Heart left ventricle (tissue), 16 donors: ENCODE measurements at regions of chr9 and their contacts with region 1.

Region 1: DNA sequence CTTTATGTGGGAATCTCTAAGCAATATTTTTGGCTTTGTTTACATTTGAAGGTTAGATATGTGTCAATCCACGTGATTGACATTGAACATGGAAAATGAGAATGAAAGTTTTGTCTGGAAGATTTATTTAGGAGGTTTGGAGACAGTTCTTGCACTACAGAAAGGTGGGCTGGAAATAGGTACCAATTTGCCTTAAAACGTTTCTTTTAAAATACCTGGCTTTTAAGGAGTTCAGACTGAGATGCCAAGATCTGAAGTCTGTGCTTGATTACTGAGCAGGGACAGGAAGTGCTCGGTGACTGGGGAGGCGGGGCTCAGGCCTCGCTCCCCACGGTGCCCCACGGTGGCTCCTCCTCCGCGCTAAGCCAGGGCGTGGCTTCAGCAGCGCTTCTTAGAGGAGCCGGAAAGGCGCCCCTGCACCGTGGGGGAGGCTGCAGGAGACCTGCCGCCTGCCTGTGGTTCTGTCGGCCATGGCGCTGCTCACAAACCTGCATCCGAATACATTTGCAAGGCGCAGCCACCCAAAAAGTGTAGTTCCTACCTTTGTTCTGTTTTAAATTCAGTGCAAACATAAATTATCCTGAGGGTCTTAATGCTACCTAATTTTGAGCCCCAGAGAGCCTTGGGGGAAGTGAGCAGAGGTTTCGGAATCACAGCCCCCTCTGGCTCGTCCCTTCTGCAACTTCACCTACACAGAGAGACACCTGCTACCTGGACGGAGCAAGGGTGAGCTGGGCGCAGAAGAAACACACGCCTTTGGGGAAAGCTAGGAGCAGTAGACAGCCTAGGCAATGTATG is 49.2 kb downstream of the USP20 start:
- DNase-seq: peak; percentile 86 to 95 (median 89)
- ATAC-seq: peak; percentile 61 to 78 (median 76)
- H3K4me3 ChIP-seq: peak overlapping the region in 11 of 12 donors; percentile 1 to 57 (median 48)
- H3K27ac ChIP-seq: peak overlapping the region; percentile 12 to 94 (median 84)
- H3K4me1 ChIP-seq: peaks cover 3 to 61% (median 38%) of the 10 kb centered on the region in 12 donors
- H3K27me3 ChIP-seq: no peaks in the 10 kb centered on the region
- CTCF ChIP-seq: no peak
- POLR2A ChIP-seq: no peak

Region 2: GRCh38 chr9:129962889-129963703 is 78.7 kb after region 1 on chr9:
- intact Hi-C with region 1: loop called in 5 of 10 experiments (anchors 2 to 10 kb)
- DNase-seq: peak in 4 of 5 donors; percentile 45 to 64 (median 58)
- ATAC-seq: peak; percentile 64 to 90 (median 80)
- H3K4me3 ChIP-seq: peak overlapping the region in 11 of 12 donors; percentile 27 to 70 (median 52)
- H3K27ac ChIP-seq: peak overlapping the region; percentile 85 to 97 (median 89)
- H3K4me1 ChIP-seq: peaks cover 0 to 68% (median 21%) of the 10 kb centered on the region in 12 donors
- H3K27me3 ChIP-seq: no peaks in the 10 kb centered on the region
- CTCF ChIP-seq: no peak
- POLR2A ChIP-seq: peak in 1 of 2 donors; percentile 48

Region 3: GRCh38 chr9:130053504-130054324 is 169.3 kb after region 1 on chr9 and contains the start of gene GPR107:
- intact Hi-C with region 1: loop called in 3 of 10 experiments (anchors 5 to 10 kb)
- DNase-seq: peak; percentile 85 to 92 (median 87)
- ATAC-seq: peak; percentile 84 to 99 (median 98)
- H3K4me3 ChIP-seq: peak within 1 kb of the TSS; percentile 79 to 100 (median 96)
- H3K27ac ChIP-seq: peak within 1 kb of the TSS; percentile 82 to 93 (median 89)
- H3K4me1 ChIP-seq: peaks cover 5 to 45% (median 27%) of the 10 kb centered on the region in 12 donors
- H3K27me3 ChIP-seq: no peaks in the 10 kb centered on the region
- CTCF ChIP-seq: peak in 1 of 12 donors; percentile 2
- POLR2A ChIP-seq: peak in 1 of 2 donors; percentile 80
- total RNA-seq, gene GPR107: 16.1 to 33.2 (median 21.3) TPM

Region 4: DNA sequence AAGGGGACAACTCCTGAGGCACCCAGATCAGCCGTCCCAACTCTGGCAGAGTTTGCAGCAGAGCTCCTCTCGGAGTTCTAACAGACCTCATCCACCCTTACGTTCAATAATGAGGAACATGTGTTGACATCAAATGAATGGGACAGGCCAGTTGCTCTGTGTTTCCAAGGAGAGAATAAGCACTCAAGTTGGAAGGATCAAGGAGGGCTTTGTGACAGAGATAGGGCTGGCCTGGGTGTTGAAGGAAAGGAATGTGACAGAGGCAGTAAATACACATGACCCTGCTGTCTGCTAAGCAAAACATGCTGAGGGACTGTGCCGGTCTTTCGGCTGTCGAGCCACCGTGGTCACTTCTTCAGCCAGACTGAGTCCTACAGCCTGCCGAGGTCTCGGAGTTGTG is 217.5 kb after region 1 on chr9:
- intact Hi-C with region 1: loop called (anchors 2 to 10 kb)
- DNase-seq: no peak
- ATAC-seq: peak; percentile 56 to 83 (median 78)
- H3K4me3 ChIP-seq: no peak overlapping the region
- H3K27ac ChIP-seq: no peak overlapping the region
- H3K4me1 ChIP-seq: peaks cover 0 to 19% (median 4%) of the 10 kb centered on the region in 12 donors
- H3K27me3 ChIP-seq: no peaks in the 10 kb centered on the region
- CTCF ChIP-seq: no peak
- POLR2A ChIP-seq: no peak

Region 5: GRCh38 chr9:130235897-130236668 is 351.7 kb after region 1 on chr9:
- intact Hi-C with region 1: loop called (anchors 2 to 10 kb)
- DNase-seq: peak; percentile 55 to 80 (median 65)
- ATAC-seq: peak; percentile 15 to 59 (median 48)
- H3K4me3 ChIP-seq: peak overlapping the region in 1 of 12 donors; percentile 19
- H3K27ac ChIP-seq: peak overlapping the region in 1 of 12 donors; percentile 80
- H3K4me1 ChIP-seq: peaks cover 0 to 15% (median 1%) of the 10 kb centered on the region in 12 donors
- H3K27me3 ChIP-seq: no peaks in the 10 kb centered on the region
- CTCF ChIP-seq: peak; percentile 96 to 100 (median 99)
- POLR2A ChIP-seq: no peak

Region 6: DNA sequence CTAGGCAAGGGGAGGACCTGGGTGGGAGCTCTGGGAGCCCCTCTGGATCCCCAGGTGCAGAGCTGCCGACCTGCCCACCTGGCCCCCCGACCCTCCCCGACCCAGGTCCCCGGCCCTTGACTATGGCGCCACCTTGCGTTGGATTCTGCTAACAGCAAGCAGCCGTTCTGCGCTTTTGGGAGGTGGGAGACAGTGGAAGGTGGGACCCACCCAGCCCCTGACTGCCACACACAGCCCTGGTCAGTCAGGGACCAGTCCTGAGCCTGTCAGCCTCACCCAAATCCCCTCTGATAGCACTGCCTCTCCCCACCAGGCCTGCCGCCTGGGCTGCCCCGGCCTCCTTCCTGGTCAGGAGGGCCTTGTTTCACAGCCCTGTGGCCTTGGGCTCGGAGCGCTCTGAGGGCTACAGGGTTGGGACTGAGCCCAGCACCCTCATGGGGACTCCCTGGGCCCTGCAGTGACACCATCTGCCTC is 459.1 kb after region 1 on chr9:
- intact Hi-C with region 1: loop called in 2 of 10 experiments (anchors 10 kb)
- DNase-seq: peak in 1 of 5 donors; percentile 37
- ATAC-seq: peak in 1 of 4 donors; percentile 19
- H3K4me3 ChIP-seq: no peak overlapping the region
- H3K27ac ChIP-seq: no peak overlapping the region
- H3K4me1 ChIP-seq: peaks cover 0 to 2% (median 0%) of the 10 kb centered on the region in 12 donors
- H3K27me3 ChIP-seq: no peaks in the 10 kb centered on the region
- CTCF ChIP-seq: peak; percentile 56 to 81 (median 70)
- POLR2A ChIP-seq: no peak